ENCODE measurements at regions of chr1 and their contacts with region 1.

Region 1: GRCh38 chr1:63847308-63847910 is 73.6 kb downstream of the ROR1 start:
- DNase-seq: peak; percentile 55 to 80
- H3K4me3 ChIP-seq: no peak overlapping the region
- H3K27ac ChIP-seq: 0 out of 2 replicates have a peak overlapping the region, but pooled peaks have one; percentile 9
- H3K4me1 ChIP-seq: peaks cover 14% of the 10 kb centered on the region
- H3K27me3 ChIP-seq: no peaks in the 10 kb centered on the region
- CTCF ChIP-seq: no peak

Region 2: DNA sequence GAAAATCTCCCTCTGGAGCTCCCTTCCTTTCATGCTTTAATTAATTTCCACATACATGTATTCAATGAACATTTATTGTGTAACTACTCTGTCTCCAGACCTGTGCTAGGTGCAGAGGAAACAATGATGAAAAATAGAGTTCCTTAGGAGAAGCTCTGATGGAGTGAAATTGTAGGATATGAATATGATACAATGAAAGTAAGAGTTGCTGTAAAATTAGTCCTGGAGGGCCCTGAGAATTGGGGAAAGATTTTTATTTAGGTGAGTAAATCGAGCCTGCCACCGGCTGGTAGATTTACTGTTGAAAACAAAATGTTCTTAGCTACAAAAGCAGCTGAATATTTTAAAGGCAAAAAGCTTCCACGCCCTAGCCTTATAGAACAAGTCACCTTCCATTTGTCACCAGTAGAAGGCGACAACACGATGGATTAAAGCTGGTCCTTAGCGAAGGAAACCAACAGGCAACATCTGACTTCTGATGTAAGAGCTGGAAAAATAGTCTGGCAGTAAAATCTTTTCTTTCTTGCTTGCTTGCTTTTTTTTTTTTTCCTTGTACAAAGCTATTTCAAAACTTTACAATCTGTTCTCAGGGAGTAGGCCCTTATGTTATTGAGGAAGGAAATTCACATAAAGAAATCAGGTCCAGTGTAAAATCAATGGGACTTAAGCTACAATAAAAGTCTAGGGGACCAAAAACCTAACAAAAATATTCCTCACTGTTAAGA is 155.5 kb before region 1 on chr1:
- CTCF ChIA-PET with region 1: interaction called, 3 read pairs
- POLR2A ChIA-PET with region 1: no interaction called
- intact Hi-C with region 1: loop called (anchors 1 kb)
- DNase-seq: peak; percentile 62 to 86
- H3K4me3 ChIP-seq: no peak overlapping the region
- H3K27ac ChIP-seq: peak overlapping the region; percentile 61
- H3K4me1 ChIP-seq: peaks cover 11% of the 10 kb centered on the region
- H3K27me3 ChIP-seq: no peaks in the 10 kb centered on the region
- CTCF ChIP-seq: peak; percentile 88

Region 3: GRCh38 chr1:63821091-63822005 is 26.1 kb before region 1 on chr1:
- CTCF ChIA-PET with region 1: no interaction called
- POLR2A ChIA-PET with region 1: interaction called, 11 read pairs
- intact Hi-C with region 1: no loop called
- DNase-seq: peak in 1 of 2 experiments; percentile 62
- H3K4me3 ChIP-seq: no peak overlapping the region
- H3K27ac ChIP-seq: no peak overlapping the region
- H3K4me1 ChIP-seq: peaks cover 28% of the 10 kb centered on the region
- H3K27me3 ChIP-seq: no peaks in the 10 kb centered on the region
- CTCF ChIP-seq: no peak

Region 4: GRCh38 chr1:63892632-63893395 is 45.4 kb after region 1 on chr1:
- CTCF ChIA-PET with region 1: interaction called, 3 read pairs
- POLR2A ChIA-PET with region 1: no interaction called
- intact Hi-C with region 1: loop called (anchors 2 kb)
- DNase-seq: peak; percentile 73 to 83
- H3K4me3 ChIP-seq: no peak overlapping the region
- H3K27ac ChIP-seq: peak overlapping the region; percentile 77
- H3K4me1 ChIP-seq: peaks cover 27% of the 10 kb centered on the region
- H3K27me3 ChIP-seq: no peaks in the 10 kb centered on the region
- CTCF ChIP-seq: no peak

Region 5: GRCh38 chr1:64006276-64007051 is 159.1 kb after region 1 on chr1:
- CTCF ChIA-PET with region 1: no interaction called
- POLR2A ChIA-PET with region 1: no interaction called
- intact Hi-C with region 1: loop called (anchors 1 kb)
- DNase-seq: peak; percentile 71 to 98
- H3K4me3 ChIP-seq: no peak overlapping the region; the same call in 1 of the 2 replicates
- H3K27ac ChIP-seq: peak overlapping the region; percentile 82
- H3K4me1 ChIP-seq: peaks cover 47% of the 10 kb centered on the region
- H3K27me3 ChIP-seq: no peaks in the 10 kb centered on the region
- CTCF ChIP-seq: no peak

Region 6: DNA sequence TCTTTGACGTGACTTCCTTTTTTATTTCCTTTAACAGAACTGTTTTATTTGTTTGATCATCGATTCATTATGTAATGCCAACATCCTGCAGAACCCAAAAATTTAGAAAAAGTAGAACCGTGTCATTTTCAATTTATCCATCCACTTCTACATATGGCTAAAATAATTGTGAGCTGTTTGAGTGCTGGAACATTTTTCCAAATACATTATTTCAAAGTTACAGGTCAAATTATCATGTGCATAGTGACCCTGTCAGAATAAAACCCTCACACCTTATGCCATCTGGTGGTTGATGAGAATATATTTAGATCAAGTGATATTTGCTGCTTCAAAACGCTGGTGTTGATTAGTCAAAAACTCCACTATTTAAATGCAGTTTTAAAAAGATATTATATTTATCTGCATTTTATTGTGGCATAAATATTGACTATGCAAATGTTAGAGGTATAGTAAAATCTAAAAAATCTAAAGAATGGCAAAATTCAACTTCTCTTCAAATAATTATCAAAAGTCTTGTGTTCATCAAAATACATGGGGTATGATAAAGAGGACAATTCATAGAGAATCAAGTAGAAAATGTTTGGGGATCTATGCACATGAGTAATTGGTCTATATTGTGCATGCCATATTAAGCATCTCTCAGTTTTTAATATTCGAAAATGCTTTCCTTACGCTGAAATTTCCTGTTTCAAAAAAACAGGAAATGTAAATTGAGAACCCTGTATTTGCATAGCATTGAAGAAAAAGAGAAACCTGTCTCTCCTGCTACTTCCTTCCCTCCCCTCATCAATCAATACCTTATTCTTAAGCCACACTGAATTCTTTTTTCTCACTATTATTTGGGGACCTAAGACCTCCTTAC is 395.7 kb after region 1 on chr1:
- CTCF ChIA-PET with region 1: interaction called, 3 read pairs
- POLR2A ChIA-PET with region 1: no interaction called
- intact Hi-C with region 1: loop called (anchors 1 kb)
- DNase-seq: no peak
- H3K4me3 ChIP-seq: no peak overlapping the region
- H3K27ac ChIP-seq: no peak overlapping the region
- H3K4me1 ChIP-seq: peaks cover 15% of the 10 kb centered on the region
- H3K27me3 ChIP-seq: no peaks in the 10 kb centered on the region
- CTCF ChIP-seq: peak; percentile 85

Measured in PC-9 (cell line).